Activated T-helper 2 cell treated with anti-CD3 and anti-CD28 coated beads, Interferon-gamma antibody, Interleukin-2, Interleukin-4, amounts not matched to agents 10 μg/mL and 5 μg/mL and 100 μg/mL, durations not matched to agents 14 hours and 24 hours and 36 hours (primary cell): ENCODE measurements at regions of chr2 and their contacts with region 1.

Region 1: GRCh38 chr2:43142921-43143438 is 83.4 kb downstream of the ZFP36L2 start:
- DNase-seq: peak; percentile 55
- H3K4me3 Mint-ChIP-seq: peak overlapping the region; percentile 80
- H3K27ac Mint-ChIP-seq: peak overlapping the region; percentile 71
- H3K4me1 Mint-ChIP-seq: peaks cover 49% of the 10 kb centered on the region
- H3K27me3 Mint-ChIP-seq: no peaks in the 10 kb centered on the region

Region 2: DNA sequence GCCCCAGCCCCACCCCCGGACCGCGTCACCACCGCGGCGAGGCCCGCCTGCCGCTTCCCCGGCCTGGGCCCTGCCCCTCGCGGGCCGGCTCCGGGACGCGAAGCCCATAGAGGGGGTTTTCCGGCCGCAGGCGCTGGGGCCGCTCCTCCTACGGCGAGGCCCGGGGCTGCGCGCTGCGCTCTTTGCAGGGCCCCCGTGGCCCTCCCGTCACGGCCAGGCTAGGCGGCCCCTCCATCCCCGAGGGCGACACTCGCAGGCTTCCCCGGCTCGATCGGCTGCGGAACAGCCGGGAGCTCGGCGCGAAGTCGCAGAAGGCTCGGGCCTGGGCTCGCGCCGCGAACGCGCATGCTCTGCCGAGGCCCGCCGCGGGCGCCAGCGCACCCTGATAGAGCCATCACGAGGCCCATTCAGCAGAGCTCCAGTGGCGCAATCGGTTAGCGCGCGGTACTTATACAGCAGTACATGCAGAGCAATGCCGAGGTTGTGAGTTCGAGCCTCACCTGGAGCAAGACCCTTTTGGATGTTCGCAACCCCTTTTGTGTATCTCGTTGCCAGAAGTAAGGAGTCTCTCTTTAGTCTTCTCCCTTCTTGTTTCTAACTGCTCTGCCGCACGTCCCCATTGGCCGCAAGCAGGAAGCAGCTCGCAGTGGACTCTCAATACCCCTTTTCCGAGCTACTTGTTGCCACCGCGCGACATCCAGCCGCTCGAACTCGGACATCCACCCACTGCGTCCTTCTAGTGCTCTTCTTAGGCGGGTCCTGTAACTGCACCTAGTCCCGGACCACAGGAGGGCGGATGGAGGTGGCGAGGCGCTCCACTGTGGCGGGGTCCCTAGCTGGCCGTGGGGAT is 332.6 kb before region 1 on chr2:
- intact Hi-C with region 1: loop called (anchors 10 kb)
- DNase-seq: peak; percentile 94
- H3K4me3 Mint-ChIP-seq: peak overlapping the region; percentile 95
- H3K27ac Mint-ChIP-seq: peak overlapping the region; percentile 100
- H3K4me1 Mint-ChIP-seq: peaks cover 21% of the 10 kb centered on the region
- H3K27me3 Mint-ChIP-seq: no peaks in the 10 kb centered on the region